Right ventricle myocardium inferior (tissue), 1 donor: ENCODE measurements at regions of chr13 and their contacts with region 1.

Region 1: GRCh38 chr13:39263033-39263432 is 224.8 kb downstream of the NHLRC3 start:
- DNase-seq: no peak
- ATAC-seq: peak; percentile 88

Region 2: GRCh38 chr13:39051157-39051556 is 211.9 kb before region 1 on chr13:
- intact Hi-C with region 1: loop called (anchors 5 kb)
- DNase-seq: no peak
- ATAC-seq: no peak

Region 3: DNA sequence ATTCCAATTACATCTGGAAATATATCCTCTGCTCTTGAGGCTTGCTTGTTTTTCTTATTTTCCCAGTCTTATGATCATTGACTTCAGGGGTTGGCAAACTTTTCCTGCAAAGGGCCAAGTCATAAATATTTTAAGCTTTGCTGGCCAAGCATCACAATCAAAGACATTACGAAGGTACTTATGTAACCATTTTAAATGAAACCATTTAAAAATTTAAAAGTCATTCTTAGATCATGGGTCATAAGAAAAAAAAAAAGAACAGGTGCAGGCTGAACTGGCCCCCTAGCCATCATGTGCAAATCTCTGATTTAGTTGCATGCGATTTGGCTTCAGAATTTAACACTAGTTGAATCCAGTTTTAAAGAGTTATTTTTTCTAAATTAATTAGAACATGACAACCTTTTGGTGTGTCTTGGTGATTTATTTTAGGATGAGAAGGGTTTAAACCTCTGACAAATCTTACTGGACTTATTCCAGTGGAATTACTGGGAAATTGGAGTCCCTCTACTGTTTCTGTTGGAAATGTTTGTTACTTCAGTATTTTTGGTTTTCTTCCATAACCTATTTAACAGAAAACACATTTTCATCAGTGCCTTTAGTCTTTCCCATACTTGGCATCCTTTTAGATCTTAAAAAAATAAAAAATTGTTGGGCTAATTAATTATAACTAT is 76.7 kb before region 1 on chr13:
- intact Hi-C with region 1: loop called (anchors 5 kb)
- DNase-seq: no peak
- ATAC-seq: peak; percentile 69

Region 4: GRCh38 chr13:39273953-39274738 is 11.1 kb after region 1 on chr13:
- intact Hi-C with region 1: no loop called
- DNase-seq: no peak
- ATAC-seq: peak; percentile 50

Region 5: DNA sequence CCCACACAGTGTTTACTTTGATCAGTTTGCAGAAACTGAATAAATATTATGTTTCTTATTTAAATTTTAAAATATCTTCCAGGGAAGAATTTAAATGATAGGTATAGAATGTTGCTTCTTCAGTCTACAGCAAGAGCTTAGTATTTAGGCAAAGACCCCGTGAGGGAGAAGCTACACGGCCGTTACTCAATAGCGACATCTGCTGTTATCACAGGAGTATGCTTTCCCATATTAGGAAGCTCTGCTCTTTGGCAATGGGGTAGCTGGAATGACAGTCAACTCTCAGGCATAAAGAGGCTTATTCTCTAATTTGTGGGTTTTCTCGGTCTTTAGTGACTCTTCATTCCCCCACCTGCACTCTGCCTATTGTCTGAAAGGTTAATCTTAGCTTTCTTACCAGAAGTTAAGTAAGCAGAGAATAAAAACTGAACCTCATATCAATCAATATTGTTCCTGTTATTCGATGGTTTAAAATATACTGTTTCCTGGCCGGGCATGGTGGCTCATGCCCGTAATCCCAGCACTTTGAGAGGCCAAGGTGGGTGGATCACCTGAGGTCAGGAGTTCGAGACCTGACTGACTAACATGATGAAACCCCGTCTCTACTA is 353.2 kb after region 1 on chr13:
- intact Hi-C with region 1: loop called (anchors 5 kb)
- DNase-seq: no peak
- ATAC-seq: peak; percentile 84